Naive thymus-derived CD4-positive, alpha-beta T cell (primary cell): ENCODE measurements at regions of chr17 and their contacts with region 1.

Region 1: GRCh38 chr17:43483674-43484372 is at the start of gene DHX8:
- DNase-seq: peak; percentile 96 to 100 (median 99)
- ATAC-seq: peak; percentile 99
- H3K4me3 ChIP-seq: peak within 1 kb of the TSS; percentile 90
- H3K4me3 Mint-ChIP-seq: peak within 1 kb of the TSS; percentile 98 to 100 (median 100)
- H3K27ac ChIP-seq: peak within 1 kb of the TSS; percentile 87
- H3K27ac Mint-ChIP-seq: peak within 1 kb of the TSS; percentile 91 to 100 (median 98)
- H3K4me1 ChIP-seq: peaks cover 21 to 29% of the 10 kb centered on the region in 2 donors
- H3K4me1 Mint-ChIP-seq: peaks cover 19 to 52% (median 36%) of the 10 kb centered on the region in 7 donors
- H3K27me3 ChIP-seq: no peaks in the 10 kb centered on the region
- H3K27me3 Mint-ChIP-seq: no peaks in the 10 kb centered on the region
- total RNA-seq, gene DHX8: 67.7 to 93.4 (median 77.8) TPM

Region 2: GRCh38 chr17:41966463-41967140 is 1517.2 kb before region 1 on chr17 and contains the start of gene CNP:
- CTCF ChIA-PET with region 1: no interaction called
- POLR2A ChIA-PET with region 1: no interaction called
- intact Hi-C with region 1: loop called in 1 of 2 experiments (anchors 2 kb)
- DNase-seq: peak; percentile 84 to 94 (median 88)
- ATAC-seq: peak; percentile 94
- H3K4me3 ChIP-seq: peak within 1 kb of the TSS; percentile 87
- H3K4me3 Mint-ChIP-seq: peak within 1 kb of the TSS; percentile 78 to 93 (median 88)
- H3K27ac ChIP-seq: peak within 1 kb of the TSS; percentile 88
- H3K27ac Mint-ChIP-seq: peak within 1 kb of the TSS; percentile 83 to 96 (median 89)
- H3K4me1 ChIP-seq: peaks cover 10 to 16% of the 10 kb centered on the region in 2 donors
- H3K4me1 Mint-ChIP-seq: peaks cover 24 to 51% (median 36%) of the 10 kb centered on the region in 7 donors
- H3K27me3 ChIP-seq: no peaks in the 10 kb centered on the region
- H3K27me3 Mint-ChIP-seq: peaks cover 0 to 2% (median 0%) of the 10 kb centered on the region in 5 donors
- total RNA-seq, gene CNP: 29.6 to 86.3 (median 32.5) TPM

Region 3: GRCh38 chr17:43125133-43125966 is 358.5 kb before region 1 on chr17 and contains the start of gene BRCA1:
- CTCF ChIA-PET with region 1: no interaction called
- POLR2A ChIA-PET with region 1: no interaction called
- intact Hi-C with region 1: loop called (anchors 1 kb)
- DNase-seq: peak; percentile 78 to 98 (median 96)
- ATAC-seq: peak; percentile 100
- H3K4me3 ChIP-seq: peak within 1 kb of the TSS; percentile 83
- H3K4me3 Mint-ChIP-seq: peak within 1 kb of the TSS; percentile 88 to 97 (median 94)
- H3K27ac ChIP-seq: peak within 1 kb of the TSS; percentile 83
- H3K27ac Mint-ChIP-seq: peak within 1 kb of the TSS; percentile 88 to 98 (median 93)
- H3K4me1 ChIP-seq: peaks cover 6 to 8% of the 10 kb centered on the region in 2 donors
- H3K4me1 Mint-ChIP-seq: peaks cover 14 to 39% (median 30%) of the 10 kb centered on the region in 7 donors
- H3K27me3 ChIP-seq: no peaks in the 10 kb centered on the region
- H3K27me3 Mint-ChIP-seq: no peaks in the 10 kb centered on the region
- total RNA-seq, gene BRCA1: 2.6 to 54.1 (median 5.4) TPM

Region 4: DNA sequence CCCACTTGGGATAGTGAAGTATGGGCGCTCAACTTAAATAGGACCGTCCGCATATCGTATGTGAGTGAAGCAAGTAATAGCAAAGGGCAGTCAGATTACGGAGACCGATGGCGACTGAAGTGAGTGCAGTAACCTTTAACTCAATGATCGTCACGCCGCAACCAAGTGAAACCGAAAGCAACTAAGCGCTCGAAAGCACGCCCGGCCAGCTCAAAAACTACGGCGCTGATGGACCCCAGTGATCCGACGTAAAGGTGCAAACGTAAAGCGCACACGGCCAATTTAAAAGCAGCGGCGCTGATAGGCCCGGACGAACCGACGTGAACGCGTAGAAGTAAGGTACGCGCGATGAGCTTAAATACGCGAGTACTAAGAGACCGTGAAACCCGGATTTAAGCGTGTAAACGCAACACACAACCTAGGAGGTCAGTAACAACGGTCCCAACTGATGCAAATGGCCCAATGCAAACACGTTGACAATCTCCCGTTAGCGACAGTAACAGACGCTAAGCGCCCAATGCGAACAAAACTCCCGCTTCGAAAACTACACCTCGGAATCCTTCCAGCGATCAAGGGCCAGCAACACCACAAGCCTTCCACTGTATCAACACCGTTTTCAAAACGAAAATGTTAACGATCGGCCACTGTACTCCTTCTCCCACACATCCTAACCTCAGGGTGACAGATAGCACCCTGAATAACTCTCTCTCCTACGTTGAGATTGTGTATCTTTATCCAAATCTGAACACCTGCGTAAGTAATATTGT is 122.9 kb before region 1 on chr17:
- CTCF ChIA-PET with region 1: interaction called, 17 read pairs
- POLR2A ChIA-PET with region 1: interaction called, 77 read pairs
- intact Hi-C with region 1: loop called (anchors 1 kb)
- DNase-seq: peak; percentile 69 to 97 (median 91)
- ATAC-seq: peak; percentile 88
- H3K4me3 ChIP-seq: peak overlapping the region; percentile 71
- H3K4me3 Mint-ChIP-seq: peak overlapping the region; percentile 87 to 99 (median 96)
- H3K27ac ChIP-seq: peak overlapping the region; percentile 95
- H3K27ac Mint-ChIP-seq: peak overlapping the region; percentile 98 to 100 (median 100)
- H3K4me1 ChIP-seq: peaks cover 13 to 14% of the 10 kb centered on the region in 2 donors
- H3K4me1 Mint-ChIP-seq: peaks cover 9 to 56% (median 38%) of the 10 kb centered on the region in 7 donors
- H3K27me3 ChIP-seq: no peaks in the 10 kb centered on the region
- H3K27me3 Mint-ChIP-seq: peaks cover 0 to 9% (median 0%) of the 10 kb centered on the region in 5 donors

Region 5: GRCh38 chr17:43393944-43394482 is 89.8 kb before region 1 on chr17:
- CTCF ChIA-PET with region 1: interaction called, 85 read pairs
- POLR2A ChIA-PET with region 1: interaction called, 65 read pairs
- intact Hi-C with region 1: loop called (anchors 1 kb)
- DNase-seq: peak; percentile 63 to 89 (median 85)
- ATAC-seq: peak; percentile 61
- H3K4me3 ChIP-seq: no peak overlapping the region
- H3K4me3 Mint-ChIP-seq: peak overlapping the region in 7 of 10 donors; percentile 1 to 47 (median 35)
- H3K27ac ChIP-seq: no peak overlapping the region
- H3K27ac Mint-ChIP-seq: peak overlapping the region in 8 of 9 donors; percentile 5 to 69 (median 42)
- H3K4me1 ChIP-seq: peaks cover 9 to 18% of the 10 kb centered on the region in 2 donors
- H3K4me1 Mint-ChIP-seq: peaks cover 5 to 49% (median 39%) of the 10 kb centered on the region in 7 donors
- H3K27me3 ChIP-seq: no peaks in the 10 kb centered on the region
- H3K27me3 Mint-ChIP-seq: no peaks in the 10 kb centered on the region

Region 6: DNA sequence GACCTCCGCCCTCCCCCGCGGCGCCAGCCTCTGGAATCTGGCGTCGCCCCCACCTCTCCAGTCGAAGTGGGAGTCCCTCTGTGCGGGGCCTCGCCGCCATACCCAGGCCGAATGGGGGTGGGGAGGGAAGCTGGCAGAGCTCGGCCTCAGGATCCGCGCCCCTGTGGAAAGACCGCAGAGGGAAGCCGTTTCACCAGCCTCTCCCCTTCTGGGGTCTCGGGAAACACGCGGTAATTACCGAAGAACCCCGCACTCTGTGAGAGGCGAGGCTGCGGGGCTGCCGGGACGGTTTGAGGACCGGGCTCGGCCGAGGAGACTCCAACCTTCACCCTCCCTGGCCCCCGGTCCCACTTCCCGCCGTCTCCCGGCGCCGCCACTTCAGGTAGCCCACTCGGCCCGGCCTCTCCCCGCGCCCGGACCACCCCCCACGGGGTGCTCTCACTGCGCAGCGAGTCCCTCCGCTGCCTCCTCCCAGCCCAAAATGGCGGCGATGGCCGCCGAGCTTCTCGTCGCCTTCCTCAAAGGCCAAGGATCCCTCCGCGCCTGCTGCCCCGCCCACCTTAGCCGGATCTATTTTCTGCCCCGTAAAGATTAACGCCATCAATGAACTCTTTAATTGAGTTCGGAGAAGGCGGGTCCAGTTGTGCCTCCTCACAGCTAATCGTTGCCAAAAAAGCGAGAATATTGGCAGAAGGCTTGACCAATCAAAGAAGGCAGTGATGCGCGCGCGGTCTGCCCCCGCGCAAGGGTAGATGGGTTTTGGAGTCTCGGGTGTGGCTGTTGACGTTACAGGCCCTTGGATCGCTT is 1677.4 kb after region 1 on chr17:
- CTCF ChIA-PET with region 1: no interaction called
- POLR2A ChIA-PET with region 1: no interaction called
- intact Hi-C with region 1: loop called in 1 of 2 experiments (anchors 5 kb)
- DNase-seq: peak; percentile 89 to 100 (median 99)
- ATAC-seq: peak; percentile 93
- H3K4me3 ChIP-seq: peak overlapping the region; percentile 95
- H3K4me3 Mint-ChIP-seq: peak overlapping the region; percentile 88 to 100 (median 96)
- H3K27ac ChIP-seq: peak overlapping the region; percentile 98
- H3K27ac Mint-ChIP-seq: peak overlapping the region; percentile 97 to 100 (median 98)
- H3K4me1 ChIP-seq: peaks cover 15 to 27% of the 10 kb centered on the region in 2 donors
- H3K4me1 Mint-ChIP-seq: peaks cover 29 to 48% (median 43%) of the 10 kb centered on the region in 7 donors
- H3K27me3 ChIP-seq: no peaks in the 10 kb centered on the region
- H3K27me3 Mint-ChIP-seq: no peaks in the 10 kb centered on the region